ENCODE measurements at regions of chr9 and their contacts with region 1.

Region 1: DNA sequence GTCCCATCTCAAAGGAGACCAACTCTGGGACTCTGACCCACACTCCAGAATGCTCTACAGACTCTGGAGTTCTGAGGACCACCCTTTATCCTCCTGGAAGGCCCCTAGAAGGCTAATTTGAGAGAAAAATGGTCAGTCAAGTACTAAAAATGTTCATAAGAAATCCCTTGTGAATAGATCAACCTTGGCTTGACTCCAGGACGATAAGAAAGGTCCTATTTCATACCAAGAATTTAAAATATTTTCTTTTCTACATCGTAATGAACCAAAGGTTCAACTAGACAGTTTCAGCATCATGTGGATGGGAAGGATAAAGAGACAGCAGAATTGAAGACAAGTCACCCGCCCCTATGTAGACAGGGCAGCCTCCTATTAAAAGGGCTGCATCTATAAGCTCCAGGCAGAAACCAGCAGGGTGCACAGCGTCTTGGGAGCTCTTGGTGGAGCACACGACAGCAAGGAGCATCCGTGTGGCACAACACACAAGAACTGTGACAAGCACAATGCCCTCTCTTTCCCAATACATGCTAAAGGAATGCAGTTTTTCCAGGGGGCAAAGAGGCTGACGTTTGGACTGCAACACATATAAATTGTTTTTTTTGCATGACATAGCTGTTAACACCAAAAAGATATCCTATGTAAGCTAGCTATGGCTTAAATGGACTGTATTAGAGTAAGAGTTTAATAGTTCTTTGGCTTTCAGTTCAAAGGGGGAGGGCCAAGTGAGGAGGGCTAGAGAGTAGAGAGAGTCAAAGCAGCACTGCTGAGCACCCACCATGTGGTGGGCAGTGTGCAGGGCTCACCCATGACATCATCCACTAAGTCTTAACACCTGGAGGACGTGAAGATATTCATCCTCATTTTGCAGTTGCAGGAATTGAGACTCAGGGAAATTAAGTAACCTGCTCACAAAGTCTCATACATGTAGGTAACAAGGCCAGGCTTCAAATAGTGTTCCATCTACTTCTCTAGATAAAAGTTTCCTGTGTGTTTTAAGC is 38.1 kb downstream of the RASEF start:
- DNase-seq: no peak
- ATAC-seq: no peak
- H3K4me3 ChIP-seq: no peak overlapping the region
- H3K4me3 Mint-ChIP-seq: no peak overlapping the region
- H3K27ac ChIP-seq: no peak overlapping the region
- H3K27ac Mint-ChIP-seq: no peak overlapping the region
- H3K4me1 ChIP-seq: no peaks in the 10 kb centered on the region
- H3K4me1 Mint-ChIP-seq: no peaks in the 10 kb centered on the region
- H3K27me3 ChIP-seq: no peaks in the 10 kb centered on the region
- H3K27me3 Mint-ChIP-seq: no peaks in the 10 kb centered on the region
- CTCF ChIP-seq: no peak

Region 2: DNA sequence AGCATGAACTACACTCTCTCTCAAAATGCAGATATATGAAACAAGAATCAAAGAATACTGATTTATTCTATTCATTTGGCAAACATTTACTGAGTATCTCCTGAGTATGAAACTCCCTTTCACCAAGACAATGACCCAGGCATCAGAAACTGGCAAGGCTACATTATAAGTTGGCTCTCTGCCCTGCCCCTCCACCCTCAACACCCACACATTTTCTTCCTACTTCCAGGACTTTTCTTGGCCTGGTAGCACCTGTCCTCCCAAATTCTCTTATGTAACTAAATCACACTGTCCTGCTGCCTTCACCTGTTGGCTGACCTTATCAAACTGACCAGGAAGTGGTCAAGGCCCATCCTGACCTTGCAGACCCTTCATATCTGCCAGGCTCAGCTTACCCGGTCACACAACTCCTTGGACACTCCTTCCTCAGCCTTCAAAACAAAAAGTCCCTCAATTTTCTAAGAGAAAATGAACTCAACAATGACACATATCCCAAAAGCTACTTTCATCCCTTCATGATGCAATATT is 34.7 kb after region 1 on chr9:
- CTCF ChIA-PET with region 1: no interaction called
- POLR2A ChIA-PET with region 1: no interaction called
- intact Hi-C with region 1: loop called in 1 of 2 experiments (anchors 1 kb)
- DNase-seq: no peak
- ATAC-seq: no peak
- H3K4me3 ChIP-seq: no peak overlapping the region
- H3K4me3 Mint-ChIP-seq: no peak overlapping the region
- H3K27ac ChIP-seq: no peak overlapping the region
- H3K27ac Mint-ChIP-seq: no peak overlapping the region
- H3K4me1 ChIP-seq: no peaks in the 10 kb centered on the region
- H3K4me1 Mint-ChIP-seq: no peaks in the 10 kb centered on the region
- H3K27me3 ChIP-seq: no peaks in the 10 kb centered on the region
- H3K27me3 Mint-ChIP-seq: peaks cover 31% of the 10 kb centered on the region
- CTCF ChIP-seq: no peak

Measured in CD8-positive, alpha-beta T cell (primary cell).